Activated naive CD4-positive, alpha-beta T cell treated with anti-CD3 and anti-CD28 coated beads, Interleukin-2, amount 10 ng/mL, durations not matched to agents 7 days and 5 days (primary cell): ENCODE measurements at regions of chr1 and their contacts with region 1.

Region 1: DNA sequence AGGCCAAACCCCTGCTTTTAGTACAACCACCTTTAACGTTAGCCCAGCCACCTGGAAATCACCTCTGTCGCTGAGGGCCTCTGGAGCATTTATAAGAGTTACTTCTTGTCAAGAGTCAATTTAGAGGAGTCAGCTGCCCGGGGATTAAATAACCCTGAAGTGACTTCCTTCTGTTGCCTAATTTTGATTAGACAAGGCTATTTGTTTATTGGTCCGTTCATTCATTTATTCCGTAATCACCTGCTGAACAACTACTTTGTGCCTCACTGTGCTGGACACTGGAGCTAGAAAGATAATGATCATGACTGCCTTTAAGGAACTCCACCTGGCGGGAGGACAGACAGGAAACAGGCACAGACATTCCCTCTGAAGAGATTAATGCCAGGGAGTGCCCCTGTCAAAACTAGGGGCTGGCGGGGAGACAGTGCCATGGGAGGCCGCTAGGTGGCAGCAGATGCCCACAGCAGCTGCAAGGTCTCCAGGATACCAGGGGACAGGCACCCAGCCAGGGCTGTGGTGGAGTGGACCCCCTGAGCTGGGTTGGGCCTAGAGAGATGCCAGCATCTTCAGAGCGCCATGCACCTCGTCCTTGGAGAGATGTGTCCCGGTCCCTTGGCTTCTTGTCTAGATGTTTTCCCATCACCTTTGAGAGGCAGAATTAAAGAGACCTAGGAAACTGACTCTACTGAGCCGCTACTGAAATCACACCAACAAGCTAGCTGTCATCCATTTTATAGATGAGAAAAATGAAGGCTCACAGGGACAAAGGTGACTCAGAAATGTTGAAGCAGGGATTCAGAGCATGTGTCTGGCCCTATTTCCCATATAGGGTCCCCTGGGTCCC is 3.7 kb downstream of the REN start:
- DNase-seq: peak; percentile 84
- H3K4me3 Mint-ChIP-seq: no peak overlapping the region
- H3K27ac Mint-ChIP-seq: no peak overlapping the region
- H3K4me1 Mint-ChIP-seq: no peaks in the 10 kb centered on the region
- H3K27me3 Mint-ChIP-seq: peaks cover 27% of the 10 kb centered on the region

Region 2: GRCh38 chr1:204207136-204207616 is 44.7 kb after region 1 on chr1:
- CTCF ChIA-PET with region 1: interaction called, 59 read pairs
- DNase-seq: peak; percentile 75
- H3K4me3 Mint-ChIP-seq: no peak overlapping the region
- H3K27ac Mint-ChIP-seq: no peak overlapping the region
- H3K4me1 Mint-ChIP-seq: no peaks in the 10 kb centered on the region
- H3K27me3 Mint-ChIP-seq: peaks cover 48% of the 10 kb centered on the region

Region 3: DNA sequence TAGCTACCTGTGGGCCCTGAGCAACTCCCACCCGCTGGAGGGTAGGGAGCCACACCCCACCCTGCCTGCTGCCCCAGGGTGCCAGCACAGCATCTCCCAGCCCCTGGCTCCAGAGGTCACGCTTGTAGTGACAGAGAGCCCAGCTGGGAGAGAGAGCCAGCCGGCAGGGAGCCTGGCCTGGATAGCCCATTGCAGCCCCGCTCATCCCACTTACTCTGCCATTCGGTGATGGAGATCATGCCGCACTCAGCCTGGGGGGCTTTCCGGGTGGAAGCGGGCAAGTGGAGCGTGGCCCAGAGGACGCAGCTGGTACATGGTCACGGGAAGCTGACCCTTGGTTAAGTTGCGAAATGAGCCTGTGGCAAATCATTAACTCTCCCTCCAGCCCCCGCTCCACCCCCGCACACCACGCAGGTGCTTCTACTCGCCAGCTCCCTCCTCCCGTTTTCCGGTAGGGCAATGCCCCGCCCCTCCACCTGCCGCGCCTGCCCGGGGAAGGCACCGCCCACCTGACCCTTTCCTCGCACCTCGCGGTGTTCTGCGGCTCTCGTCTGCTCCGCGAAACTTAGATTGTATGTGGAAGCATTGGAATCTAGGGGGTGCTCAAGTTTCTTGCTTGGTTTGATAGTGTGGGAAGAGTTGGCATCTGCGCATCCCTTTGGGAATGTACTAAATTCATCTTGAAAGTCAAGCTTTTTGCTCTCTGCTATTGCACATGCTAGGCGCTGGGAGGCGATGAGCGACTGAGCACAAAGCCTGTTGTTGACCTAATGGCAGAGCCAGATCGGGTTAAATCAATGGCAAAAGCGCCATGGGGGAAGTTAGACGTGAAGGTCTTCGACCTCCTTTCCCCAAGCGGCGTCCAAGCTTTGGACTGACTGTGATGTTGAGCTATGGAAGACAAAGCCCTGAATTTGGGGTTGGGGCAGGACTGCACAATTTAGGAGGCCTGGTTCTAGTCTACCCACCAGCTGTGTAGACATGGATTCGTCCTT is 51.5 kb after region 1 on chr1 and contains the start of gene GOLT1A:
- CTCF ChIA-PET with region 1: interaction called, 10 read pairs
- DNase-seq: peak; percentile 63
- H3K4me3 Mint-ChIP-seq: no peak within 1 kb of the TSS
- H3K27ac Mint-ChIP-seq: no peak within 1 kb of the TSS
- H3K4me1 Mint-ChIP-seq: peaks cover 6% of the 10 kb centered on the region
- H3K27me3 Mint-ChIP-seq: peaks cover 25% of the 10 kb centered on the region